Sciatic nerve (tissue), 2 donors: ENCODE measurements at regions of chr9 and their contacts with region 1.

Region 1: DNA sequence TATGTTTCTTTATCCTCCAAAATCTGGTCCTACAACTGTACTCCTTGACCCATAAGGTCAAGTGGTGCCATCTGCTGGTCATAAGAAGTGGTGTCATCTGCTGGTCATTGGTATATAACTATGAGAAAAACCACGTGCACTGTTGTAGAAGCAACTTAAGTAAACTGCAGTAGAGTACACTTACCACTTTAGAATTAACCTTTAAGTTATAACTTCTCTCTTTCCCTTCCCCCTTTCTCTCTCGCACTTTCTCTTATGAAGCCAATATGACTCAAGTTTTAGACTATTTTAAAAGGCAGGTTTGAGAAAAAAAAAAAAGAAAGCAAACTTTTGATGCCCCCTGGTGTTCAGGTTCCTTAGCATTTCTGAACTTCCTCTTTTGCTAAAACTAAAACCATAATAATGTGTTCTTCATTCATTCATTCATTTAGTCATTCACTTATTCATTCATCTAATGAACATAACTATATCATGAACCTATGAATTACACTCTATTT is 12.8 kb upstream of the MTAP start:
- DNase-seq: peak; percentile 65
- ATAC-seq: peak; percentile 95

Region 2: DNA sequence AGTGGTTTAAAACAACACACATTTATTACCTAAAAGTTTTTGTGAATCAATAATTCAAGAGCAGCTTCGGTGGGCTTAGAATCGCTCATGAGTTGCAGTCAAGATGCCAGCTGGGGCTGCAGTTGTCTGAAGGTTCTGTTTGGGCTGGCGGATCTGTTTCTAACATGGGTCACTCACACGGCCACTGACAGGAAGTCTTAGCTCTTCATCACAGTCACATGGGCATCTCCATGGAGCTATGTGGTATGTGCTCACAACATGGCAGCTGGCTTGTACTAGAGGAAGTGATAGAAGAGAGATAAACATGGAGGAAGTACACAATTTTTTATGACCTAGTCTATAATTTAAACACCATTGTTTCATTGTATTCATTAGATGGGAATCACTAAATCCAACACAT is 465.5 kb before region 1 on chr9:
- intact Hi-C with region 1: loop called (anchors 5 kb)
- DNase-seq: no peak
- ATAC-seq: no peak

Region 3: GRCh38 chr9:21770877-21771560 is 18.6 kb before region 1 on chr9:
- intact Hi-C with region 1: no loop called
- DNase-seq: no peak
- ATAC-seq: no peak